Thyroid gland (tissue), 4 donors: ENCODE measurements at regions of chr13 and their contacts with region 1.

Region 1: DNA sequence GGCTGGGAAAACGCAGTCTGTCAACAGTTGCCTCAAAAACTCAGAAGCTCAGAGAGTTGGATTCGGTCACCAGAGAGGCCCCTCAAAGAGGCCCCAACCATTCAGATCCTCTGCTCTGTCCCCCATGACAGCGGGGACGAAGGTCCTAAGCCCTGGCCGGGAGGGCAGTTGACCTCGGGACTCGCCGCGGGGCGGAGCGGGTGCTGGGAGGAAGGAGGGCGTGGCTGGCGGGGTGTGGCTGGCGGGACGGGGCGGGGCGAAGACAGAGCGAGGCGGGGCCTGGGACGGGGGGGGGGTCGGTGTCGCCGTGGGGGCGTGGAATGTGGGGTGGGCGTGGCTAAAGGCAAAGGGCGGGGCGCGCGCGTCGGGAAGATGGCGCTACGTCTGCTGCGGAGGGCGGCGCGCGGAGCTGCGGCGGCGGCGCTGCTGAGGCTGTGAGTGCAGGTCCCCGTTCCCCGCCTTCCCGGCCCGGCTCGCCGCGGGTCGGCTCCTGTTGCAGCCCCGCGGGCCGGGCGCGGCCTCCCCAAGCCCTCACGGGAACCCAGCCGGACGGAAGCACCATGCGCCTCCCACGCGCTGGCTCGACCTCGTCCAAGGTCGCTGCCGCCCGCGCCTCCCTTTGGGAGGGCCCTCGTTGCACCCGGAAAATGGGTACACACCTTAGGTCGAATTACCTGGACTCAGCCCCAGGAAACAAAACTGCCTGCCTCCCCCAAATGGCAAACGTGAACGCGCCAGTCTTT is 105.2 kb downstream of the TM9SF2 start:
- DNase-seq: peak; percentile 81 to 82
- H3K4me3 ChIP-seq: peak within 1 kb of the TSS; percentile 53 to 71 (median 67)
- H3K27ac ChIP-seq: peak within 1 kb of the TSS; percentile 68 to 81 (median 80)
- H3K4me1 ChIP-seq: peaks cover 0 to 11% of the 10 kb centered on the region in 2 donors
- H3K27me3 ChIP-seq: no peaks in the 10 kb centered on the region
- CTCF ChIP-seq: no peak
- POLR2A ChIP-seq: peak; percentile 23 to 89

Region 2: DNA sequence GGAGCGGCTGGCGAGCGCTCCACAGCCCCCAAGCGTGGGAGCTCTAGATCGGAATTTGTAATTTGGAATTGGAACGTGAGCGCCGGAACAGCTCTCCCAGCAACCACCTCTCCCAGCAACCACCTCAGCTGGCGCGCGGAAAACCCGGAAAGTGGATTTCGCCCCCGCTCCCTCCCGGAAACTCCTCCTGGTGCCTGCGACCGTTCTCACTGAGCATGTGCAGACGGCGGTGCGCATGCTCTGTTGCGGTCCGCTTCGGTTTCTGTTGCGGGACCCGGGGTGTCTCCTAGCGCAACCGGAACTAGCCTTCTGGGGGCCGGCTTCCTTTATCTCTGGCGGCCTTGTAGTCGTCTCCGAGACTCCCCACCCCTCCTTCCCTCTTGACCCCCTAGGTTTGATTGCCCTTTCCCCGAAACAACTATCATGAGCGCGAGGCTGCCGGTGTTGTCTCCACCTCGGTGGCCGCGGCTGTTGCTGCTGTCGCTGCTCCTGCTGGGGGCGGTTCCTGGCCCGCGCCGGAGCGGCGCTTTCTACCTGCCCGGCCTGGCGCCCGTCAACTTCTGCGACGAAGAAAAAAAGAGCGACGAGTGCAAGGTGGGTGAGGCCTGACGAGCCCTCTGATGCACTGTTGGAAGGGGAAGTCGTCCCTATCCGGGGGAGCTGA is 105.2 kb before region 1 on chr13 and contains the start of gene TM9SF2:
- intact Hi-C with region 1: loop called (anchors 10 kb)
- DNase-seq: peak; percentile 95 to 97
- H3K4me3 ChIP-seq: peak within 1 kb of the TSS; percentile 84 to 100 (median 95)
- H3K27ac ChIP-seq: peak within 1 kb of the TSS; percentile 67 to 90 (median 75)
- H3K4me1 ChIP-seq: peaks cover 23 to 53% of the 10 kb centered on the region in 2 donors
- H3K27me3 ChIP-seq: no peaks in the 10 kb centered on the region
- CTCF ChIP-seq: peak in 2 of 6 experiments; percentile 2 to 24
- POLR2A ChIP-seq: peak in 1 of 2 donors; percentile 83
- total RNA-seq, gene TM9SF2: 185 to 207 (median 200) TPM